Activated T-helper 1 cell treated with anti-CD3 and anti-CD28 coated beads, Interleukin-12 subunit alpha, Interleukin-12 subunit beta, Interleukin-2, Interleukin-4 antibody, amounts not matched to agents 30 ng/mL and 10 ng/mL and 1 ng/mL, durations not matched to agents 14 hours and 24 hours and 36 hours (primary cell): ENCODE measurements at regions of chr11 and their contacts with region 1.

Region 1: GRCh38 chr11:5712507-5712906 is 22.9 kb downstream of the TRIM22 start:
- DNase-seq: no peak
- H3K4me3 Mint-ChIP-seq: no peak overlapping the region
- H3K27ac Mint-ChIP-seq: no peak overlapping the region
- H3K4me1 Mint-ChIP-seq: no peaks in the 10 kb centered on the region
- H3K27me3 Mint-ChIP-seq: no peaks in the 10 kb centered on the region

Region 2: DNA sequence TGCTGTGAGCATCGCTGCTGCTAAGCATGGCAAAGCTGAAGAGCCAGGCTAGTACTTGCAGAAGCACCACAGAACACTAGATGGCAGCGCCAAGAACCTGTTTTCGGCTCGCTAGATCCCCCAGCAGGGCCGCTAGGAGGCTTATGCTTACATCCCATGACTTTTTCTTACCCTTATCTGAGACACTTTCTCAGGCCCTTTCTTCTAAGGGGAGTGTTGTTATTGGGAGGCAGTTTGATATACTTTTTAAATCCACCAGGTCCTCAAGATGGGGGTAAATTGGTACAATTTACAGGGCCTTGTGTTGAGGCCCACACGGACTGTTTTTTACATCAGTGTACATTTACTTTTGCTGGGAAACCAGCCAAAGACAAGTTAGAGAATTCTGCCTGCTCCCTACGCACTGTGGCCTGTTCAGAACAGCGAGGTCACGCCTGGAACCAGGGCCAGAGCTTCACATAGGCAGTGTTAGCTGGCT is 112.1 kb before region 1 on chr11:
- intact Hi-C with region 1: loop called (anchors 1 kb)
- DNase-seq: peak; percentile 45
- H3K4me3 Mint-ChIP-seq: no peak overlapping the region
- H3K27ac Mint-ChIP-seq: no peak overlapping the region
- H3K4me1 Mint-ChIP-seq: peaks cover 11% of the 10 kb centered on the region
- H3K27me3 Mint-ChIP-seq: peaks cover 1% of the 10 kb centered on the region